OCI-LY7 (cell line): ENCODE measurements at regions of chr1 and their contacts with region 1.

Region 1: GRCh38 chr1:6235296-6235677 is 477 bp downstream of the ICMT start:
- DNase-seq: peak; percentile 40
- H3K4me3 ChIP-seq: peak overlapping the region; percentile 96
- H3K27ac ChIP-seq: peak overlapping the region; percentile 14
- H3K4me1 ChIP-seq: peaks cover 20% of the 10 kb centered on the region
- CTCF ChIP-seq: no peak

Region 2: DNA sequence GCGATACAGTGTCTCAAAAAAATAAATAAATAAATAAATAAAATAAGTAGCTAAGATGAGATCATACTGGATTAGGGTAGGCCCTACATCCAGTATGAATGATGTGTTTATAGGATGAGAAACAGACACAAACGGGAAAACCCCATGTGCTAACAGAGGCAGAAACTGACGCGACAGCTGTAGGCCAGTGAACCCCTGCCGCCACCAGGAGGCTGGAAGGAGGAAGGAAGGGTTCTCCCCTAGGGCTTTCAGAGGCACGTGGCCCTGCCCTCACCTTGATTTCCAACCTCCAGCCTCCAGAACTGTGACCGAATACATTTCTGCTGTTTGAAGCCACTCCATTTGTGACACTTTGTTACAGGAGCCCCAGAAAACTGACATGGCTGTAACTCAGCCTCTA is 93.7 kb before region 1 on chr1:
- CTCF ChIA-PET with region 1: no interaction called
- POLR2A ChIA-PET with region 1: no interaction called
- intact Hi-C with region 1: no loop called
- DNase-seq: peak; percentile 39
- H3K4me3 ChIP-seq: no peak overlapping the region
- H3K27ac ChIP-seq: no peak overlapping the region
- H3K4me1 ChIP-seq: no peaks in the 10 kb centered on the region
- CTCF ChIP-seq: peak; percentile 55

Region 3: DNA sequence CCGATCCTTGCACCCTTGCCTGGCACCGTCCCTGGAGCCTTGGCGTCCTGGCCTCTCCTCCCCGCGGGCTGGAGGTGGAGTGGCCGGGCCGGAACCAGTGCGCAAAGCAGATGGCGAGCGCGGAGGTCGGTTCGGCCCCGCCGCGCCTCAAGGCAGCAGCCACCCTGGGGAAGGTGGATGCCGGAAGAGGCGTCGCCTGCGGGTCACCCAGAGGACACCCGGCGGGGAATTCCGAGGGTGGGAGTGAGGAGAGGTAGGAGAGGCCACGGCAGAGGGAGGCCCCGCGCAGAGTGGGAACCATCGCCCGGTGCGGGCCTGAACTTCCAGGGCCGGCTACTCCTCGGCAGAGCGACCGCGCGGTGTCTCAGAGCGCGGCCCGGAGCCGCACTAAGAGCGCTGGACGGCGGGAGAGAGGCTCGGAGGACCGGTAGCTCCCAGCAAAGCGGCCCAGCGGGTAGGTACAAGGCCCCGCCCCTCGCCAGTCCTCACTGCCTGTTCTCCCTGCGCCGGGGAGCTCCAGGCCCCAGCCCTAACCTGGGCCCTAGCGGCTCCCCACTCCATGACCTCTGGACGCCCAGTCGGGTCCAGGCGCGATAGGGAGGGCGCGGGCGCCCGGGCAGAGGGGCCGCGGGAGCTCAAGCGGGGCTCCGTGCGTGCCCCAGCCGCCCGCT is 29.3 kb before region 1 on chr1 and contains the start of gene RNF207:
- CTCF ChIA-PET with region 1: interaction called, 14 read pairs
- POLR2A ChIA-PET with region 1: interaction called, 5 read pairs
- intact Hi-C with region 1: no loop called
- DNase-seq: no peak
- H3K4me3 ChIP-seq: no peak within 1 kb of the TSS
- H3K27ac ChIP-seq: no peak within 1 kb of the TSS
- H3K4me1 ChIP-seq: peaks cover 6% of the 10 kb centered on the region
- CTCF ChIP-seq: no peak
- total RNA-seq, gene RNF207: not detected in 2 replicates

Region 4: DNA sequence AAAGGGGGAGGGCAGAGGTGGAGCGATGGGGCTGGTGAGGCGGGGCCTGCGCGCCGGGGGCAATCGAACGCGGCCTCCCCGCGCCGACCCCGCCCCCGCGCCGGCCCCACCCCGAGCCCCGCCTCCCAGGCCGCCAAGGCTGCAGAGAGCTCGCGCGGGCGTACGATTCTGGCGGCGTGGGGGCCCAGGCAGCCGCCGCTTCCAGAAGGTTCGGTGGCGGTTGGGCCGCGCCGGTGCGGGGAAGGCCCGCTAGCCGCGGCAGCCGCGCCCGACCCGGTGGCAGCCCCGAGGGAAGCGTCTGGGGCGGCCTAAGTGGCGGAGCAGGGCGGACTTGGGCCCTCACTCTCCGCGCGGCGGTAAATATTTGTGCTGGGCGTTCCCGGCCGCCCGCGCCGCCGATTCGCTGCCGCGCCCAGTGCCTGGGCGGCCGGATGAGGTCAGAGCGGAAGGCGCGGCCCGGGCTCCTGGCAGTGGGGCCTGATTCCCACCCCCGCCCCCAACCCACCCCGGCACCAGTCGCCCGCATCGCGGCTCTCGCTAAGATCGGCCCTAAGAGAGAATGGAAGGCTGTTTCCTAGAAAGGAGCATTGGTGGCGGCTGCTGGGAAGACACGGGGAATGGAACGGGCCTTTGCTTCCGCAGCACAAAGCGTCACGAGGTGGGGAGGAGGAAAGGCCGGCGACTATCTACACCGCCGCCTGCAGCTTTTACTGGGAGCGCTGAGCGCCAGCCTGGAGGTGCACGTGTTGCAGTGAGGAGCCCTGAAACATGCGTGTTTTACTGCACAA is 158.3 kb after region 1 on chr1 and contains the start of gene ACOT7:
- CTCF ChIA-PET with region 1: no interaction called
- POLR2A ChIA-PET with region 1: interaction called, 3 read pairs
- intact Hi-C with region 1: loop called (anchors 5 kb)
- DNase-seq: peak; percentile 92
- H3K4me3 ChIP-seq: peak within 1 kb of the TSS; percentile 78
- H3K27ac ChIP-seq: peak within 1 kb of the TSS; percentile 68
- H3K4me1 ChIP-seq: peaks cover 14% of the 10 kb centered on the region
- CTCF ChIP-seq: 0 out of 2 replicates have a peak, but pooled peaks have one; percentile 14
- total RNA-seq, gene ACOT7: 16.8 and 23.4 TPM in 2 replicates